HEK293 (cell line): ENCODE measurements at regions of chr1 and their contacts with region 1.

Region 1: DNA sequence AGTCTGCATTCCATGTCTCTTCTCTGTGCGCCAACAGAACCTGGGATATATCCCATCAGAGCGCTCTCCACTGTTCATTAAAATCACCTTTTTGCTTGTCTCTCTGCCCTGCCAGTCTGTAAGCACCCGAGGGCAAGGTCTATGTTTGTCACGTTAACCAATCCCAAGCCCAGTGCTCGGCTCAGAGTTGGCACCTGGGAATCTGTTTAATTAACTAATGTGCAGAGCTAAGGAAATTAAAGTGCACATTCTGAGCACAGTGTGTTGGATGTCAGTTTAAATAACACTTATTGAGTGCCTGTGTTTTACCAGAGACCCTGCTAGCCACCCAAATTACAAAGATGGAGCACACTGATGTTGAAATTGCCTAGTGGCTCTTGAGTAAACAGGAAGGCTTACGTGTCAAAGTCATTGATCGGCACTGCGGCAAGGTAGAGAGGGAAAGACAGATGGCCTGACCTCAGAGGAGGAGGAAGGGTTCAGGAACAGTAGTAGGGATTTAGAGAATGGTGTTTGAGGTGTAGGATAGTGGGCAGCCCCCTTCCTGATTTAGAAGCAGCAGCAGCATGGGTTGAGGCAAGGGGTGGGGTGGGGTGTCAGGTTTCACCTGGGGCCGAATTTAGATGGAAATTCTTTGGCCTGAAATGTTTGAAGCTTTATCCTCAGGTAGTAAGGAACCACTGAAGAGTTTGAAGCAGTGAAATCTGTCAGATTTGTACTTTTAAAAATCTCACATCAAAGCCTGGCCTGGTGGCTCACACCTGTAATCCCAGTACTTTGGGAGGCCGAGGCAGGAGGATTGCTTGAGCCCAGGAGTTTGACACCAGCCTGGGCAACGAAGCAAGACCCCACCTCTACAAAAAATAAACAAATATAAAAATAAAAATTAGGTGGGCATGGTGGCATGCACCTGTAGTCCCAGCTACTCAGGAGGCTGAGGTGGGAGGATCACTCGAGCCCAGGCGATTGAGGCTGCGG is 7.7 kb downstream of the ARMH1 start:
- H3K4me3 ChIP-seq: no peak overlapping the region
- H3K27ac ChIP-seq: no peak overlapping the region
- H3K4me1 ChIP-seq: no peaks in the 10 kb centered on the region
- CTCF ChIP-seq: no peak

Region 2: DNA sequence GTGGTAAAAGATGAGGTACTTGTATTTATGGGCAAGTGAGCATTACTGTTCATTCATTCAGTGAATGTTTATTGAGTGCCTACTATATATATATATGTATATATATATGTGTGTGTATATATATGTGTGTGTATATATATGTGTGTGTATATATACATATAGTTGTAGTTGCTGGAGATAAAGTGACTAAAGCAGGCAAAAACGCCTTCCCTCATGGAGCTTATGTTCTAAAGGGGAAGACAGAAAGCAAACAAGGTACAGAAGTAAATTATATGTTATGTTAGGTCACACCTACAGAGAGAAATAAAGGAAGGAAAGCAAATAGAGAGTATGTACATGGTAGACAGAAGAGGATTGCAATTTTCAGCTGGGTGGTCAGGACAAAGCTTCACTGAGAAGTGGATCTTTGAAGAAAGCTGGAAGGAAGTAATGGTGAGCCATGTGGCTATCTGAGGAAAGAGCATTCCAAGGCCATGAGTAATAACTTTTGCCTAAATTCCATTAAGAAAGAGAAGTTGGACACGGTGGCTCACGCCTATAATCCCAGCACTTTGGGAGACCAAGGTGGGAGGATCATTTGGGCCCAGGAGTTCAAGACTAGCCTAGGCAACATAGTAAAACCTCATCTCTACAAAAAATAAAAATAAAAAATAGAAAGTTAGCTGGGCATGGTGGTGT is 597.1 kb before region 1 on chr1:
- CTCF ChIA-PET with region 1: no interaction called
- POLR2A ChIA-PET with region 1: interaction called, 10 read pairs
- H3K4me3 ChIP-seq: no peak overlapping the region
- H3K27ac ChIP-seq: no peak overlapping the region
- H3K4me1 ChIP-seq: no peaks in the 10 kb centered on the region
- CTCF ChIP-seq: no peak

Region 3: GRCh38 chr1:44775078-44775929 is 93.1 kb after region 1 on chr1 and contains the start of gene RPS8:
- CTCF ChIA-PET with region 1: no interaction called
- POLR2A ChIA-PET with region 1: no interaction called
- H3K4me3 ChIP-seq: peak within 1 kb of the TSS; percentile 63
- H3K27ac ChIP-seq: peak within 1 kb of the TSS; percentile 99
- H3K4me1 ChIP-seq: no peaks in the 10 kb centered on the region
- CTCF ChIP-seq: no peak